Activated T-helper 2 cell treated with anti-CD3 and anti-CD28 coated beads, Interferon-gamma antibody, Interleukin-2, Interleukin-4, amounts not matched to agents 10 μg/mL and 5 μg/mL and 100 μg/mL, durations not matched to agents 14 hours and 24 hours and 36 hours (primary cell): ENCODE measurements at regions of chr12 and their contacts with region 1.

Region 1: DNA sequence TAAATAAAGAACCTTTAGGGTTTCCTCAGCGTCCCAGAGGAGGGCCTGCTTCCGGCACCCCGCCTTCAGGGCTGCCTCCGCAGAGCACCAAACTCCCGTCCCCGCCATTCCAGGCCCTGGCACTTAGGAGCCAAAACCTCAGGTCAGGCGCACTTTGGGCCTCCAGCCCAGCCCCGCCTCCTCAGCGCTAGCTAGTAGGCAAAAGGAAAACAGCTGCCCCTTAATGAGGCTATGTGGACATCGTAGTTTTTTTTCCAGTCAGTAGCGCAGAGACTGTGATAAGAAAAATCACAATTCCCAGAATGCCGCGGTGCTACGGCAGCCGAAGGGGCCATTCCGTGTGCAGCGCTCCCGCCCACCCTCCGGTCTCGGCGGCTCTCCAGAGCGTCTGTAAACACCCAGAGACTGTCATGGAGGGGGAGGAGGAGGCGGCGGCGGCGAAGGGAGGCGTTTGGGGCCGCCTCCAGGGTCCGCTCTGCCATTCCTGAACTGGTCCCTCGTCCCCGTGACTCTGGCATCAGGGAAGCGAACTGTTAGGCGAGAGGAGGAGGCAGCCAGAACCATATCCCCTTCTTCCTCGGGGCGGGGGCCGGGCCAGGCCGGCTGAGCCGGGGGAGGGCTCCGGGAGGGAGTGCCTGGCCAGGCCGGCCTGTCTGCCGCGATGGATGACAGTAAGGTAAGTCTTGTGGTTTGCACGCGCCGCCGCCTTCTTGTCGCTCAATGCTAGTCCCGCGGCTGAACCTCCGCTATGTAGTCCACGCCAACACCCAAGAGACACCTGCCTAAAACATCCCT is at the start of gene CREBL2:
- DNase-seq: peak; percentile 79
- H3K4me3 Mint-ChIP-seq: peak within 1 kb of the TSS; percentile 94
- H3K27ac Mint-ChIP-seq: peak within 1 kb of the TSS; percentile 88
- H3K4me1 Mint-ChIP-seq: peaks cover 49% of the 10 kb centered on the region
- H3K27me3 Mint-ChIP-seq: no peaks in the 10 kb centered on the region
- total RNA-seq, gene CREBL2: 22.3 and 23.3 TPM in 2 replicates

Region 2: DNA sequence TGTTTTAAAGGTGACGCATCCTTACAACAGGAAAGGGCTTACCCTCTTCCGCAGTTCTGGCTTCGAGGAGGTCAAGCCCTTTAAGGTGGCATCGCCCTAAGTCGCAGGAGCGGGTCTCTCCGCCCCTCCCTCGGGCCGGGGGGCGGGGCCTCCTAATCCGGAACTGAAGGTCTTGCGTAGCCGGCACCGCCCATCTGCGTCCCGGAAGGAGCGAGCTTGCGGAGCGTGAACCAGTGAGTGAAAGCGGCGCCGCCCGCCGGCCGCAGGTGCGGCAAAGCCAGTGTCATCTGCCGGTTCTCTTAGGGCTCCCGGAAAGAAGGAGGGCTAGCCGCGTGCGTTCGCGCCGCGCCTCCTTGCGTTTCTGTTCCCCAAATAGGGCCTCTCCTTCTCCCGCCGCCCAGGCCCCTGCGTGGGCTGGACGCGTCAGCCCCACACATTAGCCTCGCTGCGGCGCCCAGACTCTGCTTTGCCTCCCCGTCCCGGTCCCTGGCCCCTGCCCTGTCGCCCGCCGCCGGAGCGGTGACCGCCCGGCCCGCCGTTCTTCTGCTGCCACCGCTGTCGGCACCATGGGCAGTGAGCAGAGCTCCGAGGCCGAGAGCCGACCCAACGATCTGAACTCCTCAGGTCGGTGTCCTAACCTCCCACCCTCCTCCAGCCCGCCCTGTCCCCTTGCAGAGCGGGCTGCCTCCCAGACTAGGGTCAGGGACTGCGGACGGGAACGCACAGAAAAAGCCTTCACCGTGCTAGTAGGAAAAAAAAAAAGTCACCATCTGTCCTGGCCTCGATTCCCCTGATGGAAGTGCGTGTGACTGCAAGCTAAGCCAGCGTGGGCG is 254.6 kb before region 1 on chr12 and contains the start of gene BORCS5:
- intact Hi-C with region 1: loop called (anchors 1 kb)
- DNase-seq: peak; percentile 98
- H3K4me3 Mint-ChIP-seq: peak within 1 kb of the TSS; percentile 96
- H3K27ac Mint-ChIP-seq: peak within 1 kb of the TSS; percentile 99
- H3K4me1 Mint-ChIP-seq: peaks cover 41% of the 10 kb centered on the region
- H3K27me3 Mint-ChIP-seq: no peaks in the 10 kb centered on the region
- total RNA-seq, gene BORCS5: 41.8 and 45.9 TPM in 2 replicates

Region 3: DNA sequence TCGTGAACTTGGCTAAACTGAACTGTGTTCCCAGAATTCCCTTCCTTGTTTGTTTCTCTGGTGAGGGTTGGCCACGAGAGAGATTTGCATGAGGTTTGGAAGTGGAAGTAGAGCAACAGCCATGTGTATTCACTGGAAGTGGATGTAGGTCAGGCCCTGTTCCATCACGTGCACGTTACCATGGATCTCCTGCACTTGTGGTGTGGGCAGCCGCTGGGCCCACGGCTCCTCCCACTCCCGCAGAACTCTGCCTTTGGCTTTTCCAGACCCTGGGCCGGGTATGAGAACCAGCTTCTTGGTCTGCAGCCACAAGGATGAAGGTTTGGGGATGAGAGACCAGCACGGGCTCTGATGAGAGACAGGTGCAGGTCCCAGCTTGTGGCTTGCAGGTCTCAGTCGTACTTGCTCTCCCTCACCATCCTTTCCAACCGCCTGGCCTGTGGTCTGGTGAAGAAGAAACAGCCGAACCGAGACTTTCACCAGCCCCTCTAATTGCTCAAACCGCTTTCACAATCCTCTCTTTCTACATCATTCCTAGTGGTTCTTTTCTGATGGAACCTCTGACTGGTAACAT is 143.9 kb before region 1 on chr12:
- intact Hi-C with region 1: loop called (anchors 2 kb)
- DNase-seq: no peak
- H3K4me3 Mint-ChIP-seq: peak overlapping the region; percentile 33
- H3K27ac Mint-ChIP-seq: peak overlapping the region; percentile 82
- H3K4me1 Mint-ChIP-seq: peaks cover 72% of the 10 kb centered on the region
- H3K27me3 Mint-ChIP-seq: no peaks in the 10 kb centered on the region

Region 4: GRCh38 chr12:12582895-12583303 is 28.8 kb before region 1 on chr12:
- intact Hi-C with region 1: loop called (anchors 1 kb)
- DNase-seq: peak; percentile 19
- H3K4me3 Mint-ChIP-seq: no peak overlapping the region
- H3K27ac Mint-ChIP-seq: peak overlapping the region; percentile 86
- H3K4me1 Mint-ChIP-seq: peaks cover 57% of the 10 kb centered on the region
- H3K27me3 Mint-ChIP-seq: no peaks in the 10 kb centered on the region

Region 5: DNA sequence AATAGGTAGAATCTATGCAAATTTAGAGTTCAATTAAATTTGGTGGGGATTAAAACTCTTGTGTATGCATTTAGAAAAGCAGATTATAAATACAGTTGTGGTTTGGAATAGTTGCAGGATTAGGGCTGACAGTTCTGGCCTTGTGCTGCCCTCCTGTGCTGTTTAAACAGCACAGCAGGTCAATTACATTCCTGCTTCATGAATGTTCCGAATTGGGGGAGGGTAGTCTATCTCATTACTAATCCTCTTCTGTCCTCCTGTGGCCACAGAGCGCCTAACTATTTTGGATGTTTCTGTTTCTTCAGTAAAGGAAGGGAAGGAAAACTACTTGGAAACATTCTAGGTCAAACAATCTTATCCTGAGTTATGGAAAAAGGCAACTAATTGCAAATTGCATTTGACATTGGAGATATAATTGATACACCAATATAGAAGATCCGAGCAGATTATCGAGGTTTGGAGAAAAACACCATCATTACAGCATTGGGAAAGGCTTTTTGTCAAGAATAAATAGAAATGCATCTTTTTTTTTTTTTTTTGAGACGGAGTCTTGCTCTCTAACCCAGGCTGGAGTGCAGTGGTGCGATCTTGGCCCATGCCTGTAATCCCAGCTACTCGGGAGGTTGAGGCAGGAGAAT is 93.0 kb after region 1 on chr12:
- intact Hi-C with region 1: loop called (anchors 2 kb)
- DNase-seq: no peak
- H3K4me3 Mint-ChIP-seq: no peak overlapping the region
- H3K27ac Mint-ChIP-seq: peak overlapping the region; percentile 36
- H3K4me1 Mint-ChIP-seq: peaks cover 21% of the 10 kb centered on the region
- H3K27me3 Mint-ChIP-seq: no peaks in the 10 kb centered on the region